ENCODE measurements at regions of chr2 and their contacts with region 1.

Region 1: DNA sequence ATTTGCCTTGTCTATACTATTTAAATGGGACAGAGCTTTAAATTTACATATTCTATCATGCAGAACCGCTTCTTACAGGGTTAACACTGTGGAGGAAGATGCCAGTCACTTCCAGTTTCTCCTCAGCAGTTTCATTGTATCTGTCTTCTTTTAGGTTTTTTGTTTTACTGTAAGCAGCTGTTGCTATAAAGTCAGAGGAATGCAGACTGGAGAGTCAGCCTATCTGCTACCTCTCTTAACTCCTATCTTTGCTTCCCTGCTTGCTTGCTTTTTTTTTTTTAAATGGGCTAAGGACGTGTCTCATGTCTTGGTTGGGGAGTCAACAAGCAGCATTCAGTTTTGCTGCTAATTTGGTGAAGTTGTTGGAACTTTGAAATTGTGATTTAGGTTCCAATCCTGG is 8.9 kb downstream of the EPC2 start:
- DNase-seq: no peak
- ATAC-seq: no peak
- H3K4me3 ChIP-seq: no peak overlapping the region
- H3K4me3 Mint-ChIP-seq: peak overlapping the region; percentile 44
- H3K27ac ChIP-seq: no peak overlapping the region
- H3K27ac Mint-ChIP-seq: no peak overlapping the region
- H3K4me1 ChIP-seq: peaks cover 94% of the 10 kb centered on the region
- H3K4me1 Mint-ChIP-seq: peaks cover 93% of the 10 kb centered on the region
- H3K27me3 ChIP-seq: no peaks in the 10 kb centered on the region
- H3K27me3 Mint-ChIP-seq: no peaks in the 10 kb centered on the region
- CTCF ChIP-seq: no peak

Region 2: GRCh38 chr2:148687543-148687942 is 34.1 kb after region 1 on chr2:
- CTCF ChIA-PET with region 1: no interaction called
- POLR2A ChIA-PET with region 1: no interaction called
- intact Hi-C with region 1: loop called (anchors 5 kb)
- DNase-seq: no peak
- ATAC-seq: no peak
- H3K4me3 ChIP-seq: no peak overlapping the region
- H3K4me3 Mint-ChIP-seq: no peak overlapping the region
- H3K27ac ChIP-seq: no peak overlapping the region
- H3K27ac Mint-ChIP-seq: no peak overlapping the region
- H3K4me1 ChIP-seq: peaks cover 14% of the 10 kb centered on the region
- H3K4me1 Mint-ChIP-seq: peaks cover 71% of the 10 kb centered on the region
- H3K27me3 ChIP-seq: no peaks in the 10 kb centered on the region
- H3K27me3 Mint-ChIP-seq: no peaks in the 10 kb centered on the region
- CTCF ChIP-seq: no peak

Region 3: GRCh38 chr2:148699830-148700229 is 46.4 kb after region 1 on chr2:
- CTCF ChIA-PET with region 1: no interaction called
- POLR2A ChIA-PET with region 1: no interaction called
- intact Hi-C with region 1: no loop called
- DNase-seq: no peak
- ATAC-seq: no peak
- H3K4me3 ChIP-seq: no peak overlapping the region
- H3K4me3 Mint-ChIP-seq: no peak overlapping the region
- H3K27ac ChIP-seq: no peak overlapping the region
- H3K27ac Mint-ChIP-seq: no peak overlapping the region
- H3K4me1 ChIP-seq: no peaks in the 10 kb centered on the region
- H3K4me1 Mint-ChIP-seq: peaks cover 43% of the 10 kb centered on the region
- H3K27me3 ChIP-seq: no peaks in the 10 kb centered on the region
- H3K27me3 Mint-ChIP-seq: no peaks in the 10 kb centered on the region
- CTCF ChIP-seq: no peak

Region 4: DNA sequence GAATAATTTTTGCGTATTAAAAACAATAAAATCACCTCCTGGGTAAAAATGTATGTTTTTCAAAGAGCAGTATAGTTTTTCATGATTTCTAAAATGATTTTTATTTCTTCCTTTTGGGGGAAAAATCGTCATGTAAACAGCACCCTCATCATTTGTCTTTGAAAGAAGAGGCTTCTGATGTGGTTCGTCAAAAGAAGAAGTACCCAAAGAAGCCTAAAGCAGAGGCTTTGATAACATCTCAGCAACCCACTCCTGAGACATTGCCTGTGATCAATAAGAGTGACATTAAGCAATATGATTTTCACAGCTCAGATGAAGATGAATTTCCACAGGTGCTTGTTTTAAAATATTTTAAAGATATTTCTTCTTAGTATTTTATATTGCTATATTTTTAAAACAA is 111.4 kb after region 1 on chr2:
- CTCF ChIA-PET with region 1: no interaction called
- POLR2A ChIA-PET with region 1: no interaction called
- intact Hi-C with region 1: loop called (anchors 5 kb)
- DNase-seq: peak in 3 of 9 experiments; percentile 12 to 61 (median 36)
- ATAC-seq: peak; percentile 62
- H3K4me3 ChIP-seq: no peak overlapping the region
- H3K4me3 Mint-ChIP-seq: peak overlapping the region; percentile 42
- H3K27ac ChIP-seq: no peak overlapping the region
- H3K27ac Mint-ChIP-seq: no peak overlapping the region
- H3K4me1 ChIP-seq: peaks cover 5% of the 10 kb centered on the region
- H3K4me1 Mint-ChIP-seq: peaks cover 38% of the 10 kb centered on the region
- H3K27me3 ChIP-seq: no peaks in the 10 kb centered on the region
- H3K27me3 Mint-ChIP-seq: no peaks in the 10 kb centered on the region
- CTCF ChIP-seq: no peak

Measured in CD8-positive, alpha-beta T cell (primary cell).